Activated B cell treated with CpG ODN at 0.5 μM for 24 hours (primary cell): ENCODE measurements at regions of chr12 and their contacts with region 1.

Region 1: DNA sequence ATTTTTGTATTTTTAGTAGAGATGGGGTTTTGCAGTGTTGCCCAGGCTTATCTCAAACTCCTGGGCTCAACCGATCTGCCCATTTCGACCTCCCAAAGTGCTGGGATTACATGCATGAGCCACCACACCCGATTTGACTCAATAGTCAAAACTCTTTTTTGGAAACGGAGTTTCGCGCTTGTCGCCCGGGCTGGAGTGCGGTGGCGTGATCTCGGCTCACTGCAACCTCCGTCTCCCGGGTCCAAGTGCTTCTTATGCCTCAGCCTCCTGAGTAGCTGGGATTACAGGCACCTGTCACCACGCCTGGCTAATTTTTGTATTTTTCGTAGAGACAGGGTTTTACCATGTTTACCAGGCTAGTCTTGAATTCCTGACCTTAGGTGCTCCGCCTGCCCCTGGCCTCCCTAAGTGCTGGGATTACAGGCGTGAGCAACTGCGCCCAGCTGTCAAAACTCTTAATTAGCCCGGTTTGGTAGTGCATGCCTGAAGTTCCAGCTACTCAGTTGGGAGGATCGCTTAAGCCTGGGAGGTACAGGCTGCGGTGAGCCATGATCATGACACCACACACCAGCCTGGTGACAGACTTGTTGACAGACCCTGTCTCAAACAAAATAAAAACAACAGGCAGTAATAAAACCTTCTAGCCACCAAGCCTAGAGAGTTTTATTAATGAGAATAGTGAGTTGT is 12.4 kb downstream of the MED21 start:
- DNase-seq: no peak
- ATAC-seq: no peak
- H3K4me3 Mint-ChIP-seq: no peak overlapping the region
- H3K27ac Mint-ChIP-seq: no peak overlapping the region
- H3K4me1 Mint-ChIP-seq: no peaks in the 10 kb centered on the region
- H3K27me3 Mint-ChIP-seq: no peaks in the 10 kb centered on the region
- CTCF ChIP-seq: no peak

Region 2: DNA sequence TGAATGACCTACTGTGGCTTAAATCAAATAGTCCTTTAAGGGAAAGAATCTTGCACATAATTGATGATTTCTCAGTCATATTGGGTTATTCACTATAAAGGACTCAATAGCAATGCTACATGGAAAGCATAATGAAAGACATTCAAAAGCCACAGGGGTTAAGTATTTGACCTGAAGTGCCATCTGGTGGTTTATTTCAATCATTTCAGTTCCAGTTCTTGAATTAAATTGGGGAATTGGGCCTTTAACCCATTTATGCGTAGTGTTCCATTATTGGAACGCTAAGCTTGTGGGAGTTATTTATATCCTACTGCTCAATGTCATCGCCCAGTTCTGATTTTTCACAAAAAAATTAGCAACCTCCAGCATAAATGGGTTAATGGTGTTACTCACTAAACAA is 88.9 kb after region 1 on chr12:
- CTCF ChIA-PET with region 1: interaction called, 13 read pairs
- POLR2A ChIA-PET with region 1: no interaction called
- intact Hi-C with region 1: loop called (anchors 1 kb)
- DNase-seq: no peak
- ATAC-seq: no peak
- H3K4me3 Mint-ChIP-seq: no peak overlapping the region
- H3K27ac Mint-ChIP-seq: no peak overlapping the region
- H3K4me1 Mint-ChIP-seq: no peaks in the 10 kb centered on the region
- H3K27me3 Mint-ChIP-seq: no peaks in the 10 kb centered on the region
- CTCF ChIP-seq: no peak

Region 3: GRCh38 chr12:27142101-27142721 is 107.5 kb after region 1 on chr12:
- CTCF ChIA-PET with region 1: no interaction called
- POLR2A ChIA-PET with region 1: no interaction called
- intact Hi-C with region 1: loop called (anchors 1 kb)
- DNase-seq: no peak
- ATAC-seq: peak; percentile 76
- H3K4me3 Mint-ChIP-seq: no peak overlapping the region
- H3K27ac Mint-ChIP-seq: no peak overlapping the region
- H3K4me1 Mint-ChIP-seq: peaks cover 12% of the 10 kb centered on the region
- H3K27me3 Mint-ChIP-seq: no peaks in the 10 kb centered on the region
- CTCF ChIP-seq: peak; percentile 43